H1 (cell line): ENCODE measurements at regions of chr7 and their contacts with region 1.

Region 1: GRCh38 chr7:132580717-132581285 is 4.5 kb upstream of the PLXNA4 start:
- DNase-seq: peak in 1 of 2 experiments; percentile 86
- H3K4me3 ChIP-seq: no peak overlapping the region
- H3K27ac ChIP-seq: no peak overlapping the region
- H3K4me1 ChIP-seq: peaks cover 0 to 9% (median 6%) of the 10 kb centered on the region in 4 experiments; a peak in 5 of 7 replicates
- H3K27me3 ChIP-seq: peaks cover 26 to 34% (median 29%) of the 10 kb centered on the region in 4 experiments
- CTCF ChIP-seq: peak; percentile 78 to 90 (median 86)
- EP300 ChIP-seq: no peak
- POLR2A ChIP-seq: no peak
- RAD21 ChIP-seq: peak; percentile 90 to 95

Region 2: GRCh38 chr7:132564116-132564515 is 16.7 kb before region 1 on chr7:
- CTCF ChIA-PET with region 1: interaction called, 10 read pairs
- POLR2A ChIA-PET with region 1: no interaction called
- DNase-seq: no peak
- H3K4me3 ChIP-seq: no peak overlapping the region
- H3K27ac ChIP-seq: no peak overlapping the region
- H3K4me1 ChIP-seq: peaks cover 0 to 7% (median 1%) of the 10 kb centered on the region in 4 experiments; a peak in 1 of 7 replicates
- H3K27me3 ChIP-seq: peaks cover 0 to 27% (median 13%) of the 10 kb centered on the region in 4 experiments; a peak in 6 of 7 replicates
- CTCF ChIP-seq: no peak
- EP300 ChIP-seq: no peak
- POLR2A ChIP-seq: no peak
- RAD21 ChIP-seq: no peak

Region 3: GRCh38 chr7:132614428-132615318 is 33.9 kb after region 1 on chr7:
- CTCF ChIA-PET with region 1: interaction called, 10 read pairs
- POLR2A ChIA-PET with region 1: no interaction called
- DNase-seq: peak; percentile 34 to 67
- H3K4me3 ChIP-seq: peak overlapping the region; percentile 31 to 60 (median 57)
- H3K27ac ChIP-seq: no peak overlapping the region
- H3K4me1 ChIP-seq: peaks cover 2 to 13% (median 4%) of the 10 kb centered on the region in 4 experiments; a peak in 5 of 7 replicates
- H3K27me3 ChIP-seq: peaks cover 0 to 13% (median 5%) of the 10 kb centered on the region in 4 experiments; a peak in 3 of 7 replicates
- CTCF ChIP-seq: peak; percentile 19 to 51 (median 43)
- EP300 ChIP-seq: no peak
- POLR2A ChIP-seq: no peak; a peak in 1 of 3 replicates
- RAD21 ChIP-seq: peak; percentile 32 to 33; a peak in 3 of 4 replicates

Region 4: GRCh38 chr7:132654150-132654549 is 73.3 kb after region 1 on chr7:
- CTCF ChIA-PET with region 1: interaction called, 10 read pairs
- POLR2A ChIA-PET with region 1: no interaction called
- DNase-seq: peak in 1 of 2 experiments; percentile 40
- H3K4me3 ChIP-seq: no peak overlapping the region
- H3K27ac ChIP-seq: no peak overlapping the region
- H3K4me1 ChIP-seq: peaks cover 3 to 10% (median 4%) of the 10 kb centered on the region in 4 experiments; a peak in 6 of 7 replicates
- H3K27me3 ChIP-seq: no peaks in the 10 kb centered on the region
- CTCF ChIP-seq: peak in 2 of 3 experiments; percentile 51 to 65; a peak in 3 of 4 replicates
- EP300 ChIP-seq: no peak
- POLR2A ChIP-seq: no peak
- RAD21 ChIP-seq: peak; percentile 41 to 59

Region 5: DNA sequence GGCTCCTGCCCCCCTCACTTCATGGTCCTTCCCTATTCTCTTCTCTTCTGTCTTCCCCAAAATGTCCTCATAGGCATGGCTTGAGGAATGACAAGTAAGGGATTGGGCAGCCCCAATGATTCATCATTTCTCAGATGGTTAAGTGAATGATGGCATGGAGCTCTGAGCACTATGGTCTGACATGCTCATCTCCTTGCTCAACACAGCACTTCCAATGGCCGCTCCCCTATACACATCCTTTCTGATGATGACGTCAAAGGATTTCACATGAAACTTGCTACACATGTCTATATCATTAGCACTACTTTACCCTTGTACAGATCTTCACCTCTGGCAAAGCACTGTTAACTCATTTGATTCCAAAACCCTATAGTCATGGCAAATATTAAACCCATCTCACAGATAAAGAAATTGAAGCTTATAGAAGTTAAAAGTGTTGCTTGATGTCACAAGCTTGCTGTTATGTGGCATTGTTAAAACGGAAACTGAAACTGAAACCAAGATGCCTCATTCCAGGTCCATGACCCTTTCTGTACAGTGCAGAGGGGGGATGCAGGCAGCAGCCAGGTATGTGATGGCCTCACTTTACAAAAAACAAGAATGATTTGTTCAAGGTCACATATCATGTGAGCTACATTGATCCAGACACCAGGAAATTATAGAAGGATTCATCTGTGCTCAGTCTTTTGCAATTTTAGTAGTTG is 85.4 kb after region 1 on chr7:
- CTCF ChIA-PET with region 1: no interaction called
- POLR2A ChIA-PET with region 1: no interaction called
- DNase-seq: no peak
- H3K4me3 ChIP-seq: no peak overlapping the region
- H3K27ac ChIP-seq: no peak overlapping the region
- H3K4me1 ChIP-seq: no peaks in the 10 kb centered on the region
- H3K27me3 ChIP-seq: no peaks in the 10 kb centered on the region
- CTCF ChIP-seq: no peak
- EP300 ChIP-seq: no peak
- POLR2A ChIP-seq: no peak
- RAD21 ChIP-seq: no peak